Calu3 (cell line): ENCODE measurements at regions of chr10 and their contacts with region 1.

Region 1: DNA sequence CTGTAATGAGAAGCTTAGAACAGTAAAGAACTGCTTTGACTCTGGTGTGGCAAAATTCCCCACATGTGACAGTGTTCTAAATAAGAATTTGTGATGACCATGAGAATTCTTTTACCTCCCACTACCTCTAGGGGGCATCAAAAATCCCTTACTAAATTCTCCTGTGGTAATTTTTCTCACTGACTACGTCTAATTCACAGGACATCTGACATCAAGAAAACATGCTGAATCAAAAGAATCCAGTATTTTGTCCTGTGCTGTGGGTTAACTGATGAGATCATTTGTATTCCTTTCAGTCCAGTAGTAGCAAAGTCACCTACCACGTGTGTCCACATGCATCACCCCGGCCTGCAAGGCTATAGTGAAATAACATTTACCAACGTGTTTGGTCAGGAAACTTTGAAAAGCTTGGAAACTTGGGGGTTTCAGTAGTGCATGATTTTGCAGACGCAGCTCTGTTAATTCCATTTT is 103.8 kb downstream of the ATE1 start:
- DNase-seq: peak; percentile 4
- H3K4me3 Mint-ChIP-seq: no peak overlapping the region
- H3K27ac Mint-ChIP-seq: no peak overlapping the region
- H3K4me1 Mint-ChIP-seq: no peaks in the 10 kb centered on the region
- H3K27me3 Mint-ChIP-seq: no peaks in the 10 kb centered on the region
- CTCF ChIP-seq: peak; percentile 31

Region 2: DNA sequence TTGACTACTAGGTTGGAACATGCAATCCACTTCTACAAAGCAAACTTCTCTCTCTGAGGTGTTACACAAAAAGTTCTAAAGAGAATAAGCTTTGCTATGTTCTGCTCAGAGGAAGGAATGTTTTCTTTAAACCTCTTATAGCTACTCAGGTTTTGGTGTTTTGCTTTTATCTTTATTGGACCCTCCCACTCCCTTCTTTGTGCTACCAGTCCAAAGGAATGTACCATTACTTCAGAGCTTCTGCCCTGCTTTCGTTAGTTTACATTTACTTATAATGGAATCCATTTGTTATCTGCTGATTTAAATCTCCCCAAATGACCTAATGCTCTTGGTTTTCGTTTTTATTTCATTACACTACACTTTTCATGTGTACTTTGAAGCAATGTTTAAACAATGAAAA is 51.1 kb before region 1 on chr10:
- CTCF ChIA-PET with region 1: no interaction called
- intact Hi-C with region 1: no loop called
- DNase-seq: no peak
- H3K4me3 Mint-ChIP-seq: no peak overlapping the region
- H3K27ac Mint-ChIP-seq: no peak overlapping the region
- H3K4me1 Mint-ChIP-seq: no peaks in the 10 kb centered on the region
- H3K27me3 Mint-ChIP-seq: no peaks in the 10 kb centered on the region
- CTCF ChIP-seq: no peak

Region 3: DNA sequence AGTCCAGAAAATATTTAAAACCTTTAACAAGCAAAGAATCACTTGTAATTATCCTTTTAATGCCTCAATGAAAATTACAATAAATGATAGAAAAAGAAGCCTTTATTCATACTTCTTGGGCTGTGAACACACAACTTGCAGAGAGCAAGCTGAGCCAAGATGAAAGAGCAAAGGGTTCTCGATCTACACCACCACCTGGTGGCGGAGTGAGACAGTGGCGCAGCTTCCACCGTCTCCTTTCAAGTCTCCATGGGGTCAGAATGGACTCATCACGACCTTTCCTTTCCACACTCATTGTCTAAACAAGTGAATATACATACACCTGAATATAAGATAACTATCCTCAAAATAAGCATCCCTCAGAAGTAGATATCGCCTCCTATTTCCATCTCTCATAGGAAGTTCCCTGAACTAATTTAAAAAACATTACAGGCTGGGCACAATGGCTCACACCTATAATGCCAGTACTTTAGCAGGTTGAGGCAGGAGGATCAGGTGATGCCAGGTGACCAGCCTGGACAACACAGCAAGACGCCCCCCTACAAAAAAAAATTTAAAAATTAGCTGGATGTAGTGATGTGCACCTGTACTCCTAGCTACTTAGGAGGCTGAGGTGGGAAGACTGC is 63.1 kb after region 1 on chr10:
- CTCF ChIA-PET with region 1: no interaction called
- intact Hi-C with region 1: loop called (anchors 2 kb)
- DNase-seq: peak; percentile 58
- H3K4me3 Mint-ChIP-seq: no peak overlapping the region
- H3K27ac Mint-ChIP-seq: no peak overlapping the region
- H3K4me1 Mint-ChIP-seq: peaks cover 8% of the 10 kb centered on the region
- H3K27me3 Mint-ChIP-seq: no peaks in the 10 kb centered on the region
- CTCF ChIP-seq: peak; percentile 56